ENCODE measurements at regions of chr18 and their contacts with region 1.

Region 1: GRCh38 chr18:76958692-76959341 is 136.5 kb downstream of the ZNF236 start:
- DNase-seq: no peak
- H3K4me3 ChIP-seq: no peak overlapping the region
- H3K27ac ChIP-seq: no peak overlapping the region
- H3K4me1 ChIP-seq: no peaks in the 10 kb centered on the region
- H3K27me3 ChIP-seq: no peaks in the 10 kb centered on the region
- CTCF ChIP-seq: no peak

Region 2: DNA sequence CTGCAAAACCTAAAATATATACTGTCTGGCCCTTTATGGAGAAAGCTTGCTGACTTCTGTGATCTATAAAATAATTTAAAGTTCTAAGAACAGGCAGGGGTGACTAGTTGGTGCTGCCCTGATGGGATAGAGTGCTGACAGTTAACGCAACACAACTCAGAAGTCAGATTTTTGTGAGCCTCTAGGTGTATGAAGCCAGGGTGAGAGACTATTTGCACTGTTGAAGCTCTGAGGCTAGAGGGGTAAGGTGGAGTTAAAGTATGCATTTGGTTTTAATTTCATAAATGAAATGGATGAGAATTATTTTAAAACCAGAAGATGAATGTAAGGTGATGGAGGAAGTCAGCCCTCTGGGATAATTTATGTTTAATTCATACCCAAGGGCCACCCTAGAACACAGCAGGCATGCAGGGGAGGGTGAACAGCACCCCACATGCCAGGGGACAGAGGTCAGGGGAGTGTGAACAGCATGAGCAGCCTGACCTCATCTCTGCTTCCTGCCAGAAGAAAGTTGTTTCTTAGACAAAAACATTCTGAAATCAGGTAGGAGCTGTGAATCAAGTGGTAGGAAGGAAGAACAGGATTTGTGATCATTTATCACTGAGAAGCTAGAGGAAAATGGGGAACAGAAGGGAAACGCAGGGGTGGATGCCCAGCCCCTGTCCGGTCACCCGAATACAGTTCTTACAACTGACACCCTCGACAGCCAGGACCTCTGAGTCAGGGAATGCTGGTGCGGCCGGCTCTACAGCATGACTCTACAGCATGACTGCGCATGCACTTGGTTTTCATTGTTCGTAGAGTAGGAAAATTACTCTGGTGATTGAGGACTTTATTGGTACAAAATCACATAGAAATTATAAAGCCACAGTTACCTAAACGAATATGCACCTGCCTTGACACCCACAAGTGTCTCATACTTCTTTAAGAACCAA is 80.6 kb after region 1 on chr18:
- CTCF ChIA-PET with region 1: no interaction called
- dilution Hi-C with region 1: no loop called
- in situ Hi-C with region 1: no loop called
- intact Hi-C with region 1: no loop called
- DNase-seq: peak; percentile 23
- H3K4me3 ChIP-seq: no peak overlapping the region
- H3K27ac ChIP-seq: no peak overlapping the region
- H3K4me1 ChIP-seq: peaks cover 6% of the 10 kb centered on the region
- H3K27me3 ChIP-seq: no peaks in the 10 kb centered on the region
- CTCF ChIP-seq: no peak

Region 3: DNA sequence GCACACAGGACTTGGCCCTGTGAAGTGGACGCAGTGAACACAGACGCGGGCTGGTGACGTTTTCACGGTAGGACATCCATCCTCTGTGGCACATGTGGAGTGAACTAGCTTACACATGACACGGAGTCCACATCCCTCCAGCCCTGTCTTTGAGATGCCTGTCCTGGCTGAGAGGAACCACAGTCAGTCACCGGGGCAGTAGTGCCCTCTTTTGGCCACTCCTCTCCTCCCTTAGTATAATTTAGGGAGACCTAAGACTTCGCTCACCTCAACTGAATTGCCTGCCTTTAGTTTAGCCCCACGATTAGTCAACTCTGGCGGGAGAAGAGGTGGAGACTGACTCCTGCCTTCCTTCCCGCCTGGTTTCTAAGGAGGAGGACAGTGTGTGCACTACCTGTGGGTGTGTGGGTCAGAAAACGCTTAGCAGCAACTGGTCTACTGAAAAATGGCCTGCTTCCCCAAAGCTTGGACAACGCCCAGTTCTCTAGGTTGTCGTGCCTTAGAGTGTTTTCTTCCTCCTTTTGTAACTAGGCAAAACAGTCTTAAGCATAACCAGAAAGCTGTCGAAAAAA is 103.2 kb after region 1 on chr18:
- CTCF ChIA-PET with region 1: no interaction called
- dilution Hi-C with region 1: loop called (anchors 5 kb)
- in situ Hi-C with region 1: no loop called
- intact Hi-C with region 1: no loop called
- DNase-seq: no peak
- H3K4me3 ChIP-seq: no peak overlapping the region
- H3K27ac ChIP-seq: no peak overlapping the region
- H3K4me1 ChIP-seq: peaks cover 44% of the 10 kb centered on the region
- H3K27me3 ChIP-seq: no peaks in the 10 kb centered on the region
- CTCF ChIP-seq: no peak